ENCODE measurements at regions of chr14 and their contacts with region 1.

Region 1: GRCh38 chr14:21748869-21749303 is 75.3 kb upstream of the OR4E1 start:
- DNase-seq: peak; percentile 70
- ATAC-seq: peak; percentile 82
- H3K4me3 Mint-ChIP-seq: peak overlapping the region; percentile 41
- H3K27ac Mint-ChIP-seq: peak overlapping the region; percentile 57
- H3K4me1 Mint-ChIP-seq: peaks cover 6% of the 10 kb centered on the region
- H3K27me3 Mint-ChIP-seq: peaks cover 24% of the 10 kb centered on the region

Region 2: DNA sequence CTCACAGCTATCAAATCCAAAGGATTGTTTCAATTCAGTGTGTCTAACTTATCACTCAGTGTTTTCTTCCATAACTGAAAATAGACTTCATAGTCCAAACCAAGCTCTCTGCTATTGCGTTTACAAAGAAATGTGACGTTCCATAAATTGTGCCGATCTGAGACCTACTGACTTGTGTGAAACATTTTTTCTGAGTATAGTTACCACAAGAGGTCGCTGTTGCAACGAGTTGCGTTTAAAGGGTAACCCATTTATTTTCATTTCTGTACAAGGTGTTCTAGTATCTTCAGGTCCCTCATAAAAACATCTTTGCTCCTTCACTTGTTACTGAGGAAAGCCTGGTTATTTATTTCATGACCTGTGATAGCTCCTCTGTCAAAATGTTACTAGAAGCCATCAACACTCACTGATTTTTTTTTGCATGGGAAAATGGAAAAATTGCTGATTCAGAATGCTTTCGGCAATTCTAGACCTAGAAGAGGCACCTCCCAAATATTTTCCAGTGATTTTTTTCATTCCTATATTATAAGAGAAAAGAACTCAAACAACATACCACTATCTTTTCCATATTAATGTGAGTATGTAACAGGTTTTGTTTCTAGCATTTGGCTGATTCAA is 14.3 kb before region 1 on chr14:
- CTCF ChIA-PET with region 1: interaction called, 10 read pairs
- DNase-seq: peak; percentile 59
- ATAC-seq: peak; percentile 53
- H3K4me3 Mint-ChIP-seq: peak overlapping the region; percentile 64
- H3K27ac Mint-ChIP-seq: peak overlapping the region; percentile 64
- H3K4me1 Mint-ChIP-seq: peaks cover 10% of the 10 kb centered on the region
- H3K27me3 Mint-ChIP-seq: peaks cover 60% of the 10 kb centered on the region

Region 3: DNA sequence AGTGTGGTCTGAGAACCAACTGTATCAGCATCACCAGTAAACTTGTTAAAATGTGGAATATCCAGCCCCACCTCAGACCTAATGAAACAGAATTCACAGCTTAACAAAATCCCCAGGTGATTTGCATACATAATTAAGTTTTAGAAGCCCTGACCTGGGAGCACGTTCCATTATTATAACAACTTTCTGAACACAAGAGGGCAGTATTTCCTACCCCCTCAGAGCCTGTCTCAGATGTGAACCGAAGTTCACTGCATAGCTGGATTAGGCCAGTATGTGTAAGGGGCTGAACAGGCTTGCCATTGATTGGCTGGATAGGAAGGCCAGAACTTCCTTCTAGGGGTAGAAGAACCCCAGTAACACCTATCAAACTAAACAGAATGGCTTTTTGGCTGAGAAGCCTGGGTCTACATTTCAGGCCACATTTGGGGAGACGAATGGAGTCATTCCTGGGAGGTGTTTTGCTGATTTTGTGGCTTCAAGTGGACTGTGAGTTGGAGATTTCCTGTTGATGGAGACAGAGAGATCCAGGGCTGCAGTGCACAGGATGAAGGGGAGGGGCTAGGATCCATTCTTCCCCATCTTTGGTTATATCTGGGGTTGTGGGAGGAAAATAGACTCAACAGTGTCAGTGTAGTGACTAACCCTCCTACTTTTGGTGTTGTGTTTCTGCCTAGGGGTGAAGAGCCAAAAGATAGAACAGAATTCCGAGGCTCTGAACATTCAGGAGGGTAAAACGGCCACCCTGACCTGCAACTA is 19.4 kb after region 1 on chr14:
- CTCF ChIA-PET with region 1: interaction called, 15 read pairs
- DNase-seq: peak; percentile 54
- ATAC-seq: peak; percentile 93
- H3K4me3 Mint-ChIP-seq: peak overlapping the region; percentile 61
- H3K27ac Mint-ChIP-seq: peak overlapping the region; percentile 80
- H3K4me1 Mint-ChIP-seq: peaks cover 8% of the 10 kb centered on the region
- H3K27me3 Mint-ChIP-seq: peaks cover 21% of the 10 kb centered on the region

Measured in activated CD8-positive, alpha-beta memory T cell treated with anti-CD3 and anti-CD28 coated beads, Interleukin-2, amount 10 ng/mL, durations not matched to agents 7 days and 5 days (primary cell).